ENCODE measurements at regions of chr3 and their contacts with region 1.

Region 1: DNA sequence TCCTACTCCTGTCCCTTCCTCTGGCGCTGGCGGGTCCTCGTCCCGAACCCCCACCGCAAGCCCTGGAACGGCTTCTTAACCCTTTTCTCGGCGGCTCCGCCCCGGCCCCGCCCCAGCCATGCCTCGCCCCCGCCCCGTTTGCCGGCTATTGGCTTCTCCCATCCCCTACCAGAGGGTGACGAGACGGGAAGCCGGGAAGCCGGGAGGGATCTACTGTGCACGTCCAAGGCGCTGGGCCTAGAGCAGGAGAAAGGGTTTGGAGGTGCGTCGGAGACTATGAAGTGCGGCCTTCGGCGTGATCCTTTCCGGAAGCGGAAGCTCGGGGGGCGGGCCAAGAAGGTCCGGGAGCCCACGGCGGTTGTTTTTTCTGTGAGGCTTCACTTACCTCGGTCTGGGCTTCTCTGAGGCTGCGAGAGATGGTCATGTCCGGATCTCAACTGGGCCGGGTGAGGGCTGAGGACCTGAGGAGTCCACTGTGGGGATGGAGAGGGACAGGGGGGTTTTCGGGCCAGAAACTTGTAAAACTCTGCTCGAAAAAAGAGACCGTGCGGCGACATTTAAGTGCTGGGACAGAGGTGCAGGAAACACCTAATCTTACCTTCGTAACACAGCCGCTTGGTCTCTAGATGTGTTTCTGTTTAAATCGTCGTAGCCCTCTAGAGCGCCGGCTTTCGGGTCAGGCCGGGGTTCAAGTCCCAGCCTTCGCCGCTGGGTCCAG is 21.4 kb downstream of the ROPN1B start:
- DNase-seq: peak; percentile 83 to 92
- H3K4me3 ChIP-seq: peak overlapping the region; percentile 41 to 50 (median 47)
- H3K27ac ChIP-seq: peak overlapping the region; percentile 51 to 77 (median 56)
- H3K4me1 ChIP-seq: peaks cover 5 to 7% of the 10 kb centered on the region in 2 donors
- H3K27me3 ChIP-seq: no peaks in the 10 kb centered on the region
- CTCF ChIP-seq: no peak
- POLR2A ChIP-seq: peak in 1 of 2 donors; percentile 76

Region 2: GRCh38 chr3:126077754-126078153 is 87.3 kb after region 1 on chr3:
- intact Hi-C with region 1: loop called (anchors 10 kb)
- DNase-seq: no peak
- H3K4me3 ChIP-seq: no peak overlapping the region
- H3K27ac ChIP-seq: no peak overlapping the region
- H3K4me1 ChIP-seq: peaks cover 0 to 8% of the 10 kb centered on the region in 2 donors
- H3K27me3 ChIP-seq: no peaks in the 10 kb centered on the region
- CTCF ChIP-seq: no peak
- POLR2A ChIP-seq: no peak

Region 3: DNA sequence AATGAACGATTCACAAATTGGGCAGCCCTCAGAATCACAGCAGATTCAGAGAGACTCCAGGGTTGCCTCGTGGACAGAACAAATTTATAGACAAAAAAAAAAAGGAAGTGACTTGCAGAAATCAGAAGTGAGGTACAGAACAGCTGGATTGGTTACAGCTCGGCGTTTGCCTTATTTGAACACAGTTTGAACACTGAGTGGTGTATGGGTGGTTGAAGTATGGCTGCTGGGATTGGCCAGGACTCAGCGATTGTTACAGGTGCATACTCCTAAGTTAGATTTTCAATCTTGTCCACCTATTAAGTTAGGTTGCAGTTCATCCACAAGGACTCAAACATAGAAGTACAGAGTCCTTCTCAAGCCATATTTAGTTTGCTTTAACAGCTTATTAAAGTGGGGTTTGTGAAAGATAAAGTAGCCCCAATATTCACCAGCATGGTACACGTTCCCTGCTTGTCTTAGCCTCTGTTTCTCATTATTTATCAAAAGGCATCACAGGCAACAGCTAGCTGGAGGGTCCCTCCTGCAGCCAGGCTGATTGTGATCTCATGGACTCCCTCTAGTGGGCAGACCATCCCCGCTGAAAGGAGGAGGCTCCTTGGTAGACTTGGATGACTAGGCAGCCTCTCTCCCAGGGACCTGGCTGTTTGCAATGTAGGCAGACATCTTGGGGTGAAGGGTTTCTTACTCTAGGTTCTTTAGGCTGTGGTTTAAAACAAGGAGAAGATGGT is 207.6 kb after region 1 on chr3:
- intact Hi-C with region 1: no loop called
- DNase-seq: peak; percentile 77 to 78
- H3K4me3 ChIP-seq: no peak overlapping the region
- H3K27ac ChIP-seq: no peak overlapping the region
- H3K4me1 ChIP-seq: no peaks in the 10 kb centered on the region
- H3K27me3 ChIP-seq: no peaks in the 10 kb centered on the region
- CTCF ChIP-seq: peak; percentile 31 to 72 (median 54)
- POLR2A ChIP-seq: no peak

Measured in thyroid gland (tissue), 4 donors.